ENCODE measurements at regions of chr2 and their contacts with region 1.

Region 1: GRCh38 chr2:136255648-136256463 is 137.9 kb upstream of the CXCR4 start:
- DNase-seq: peak; percentile 78
- ATAC-seq: peak; percentile 69
- H3K4me3 ChIP-seq: no peak overlapping the region
- H3K4me3 Mint-ChIP-seq: peak overlapping the region; percentile 64
- H3K27ac ChIP-seq: peak overlapping the region; percentile 43 to 74
- H3K27ac Mint-ChIP-seq: peak overlapping the region; percentile 92
- H3K4me1 ChIP-seq: peaks cover 55% of the 10 kb centered on the region in 2 donors
- H3K4me1 Mint-ChIP-seq: peaks cover 91% of the 10 kb centered on the region
- H3K27me3 ChIP-seq: no peaks in the 10 kb centered on the region
- H3K27me3 Mint-ChIP-seq: no peaks in the 10 kb centered on the region
- CTCF ChIP-seq: peak; percentile 24

Region 2: DNA sequence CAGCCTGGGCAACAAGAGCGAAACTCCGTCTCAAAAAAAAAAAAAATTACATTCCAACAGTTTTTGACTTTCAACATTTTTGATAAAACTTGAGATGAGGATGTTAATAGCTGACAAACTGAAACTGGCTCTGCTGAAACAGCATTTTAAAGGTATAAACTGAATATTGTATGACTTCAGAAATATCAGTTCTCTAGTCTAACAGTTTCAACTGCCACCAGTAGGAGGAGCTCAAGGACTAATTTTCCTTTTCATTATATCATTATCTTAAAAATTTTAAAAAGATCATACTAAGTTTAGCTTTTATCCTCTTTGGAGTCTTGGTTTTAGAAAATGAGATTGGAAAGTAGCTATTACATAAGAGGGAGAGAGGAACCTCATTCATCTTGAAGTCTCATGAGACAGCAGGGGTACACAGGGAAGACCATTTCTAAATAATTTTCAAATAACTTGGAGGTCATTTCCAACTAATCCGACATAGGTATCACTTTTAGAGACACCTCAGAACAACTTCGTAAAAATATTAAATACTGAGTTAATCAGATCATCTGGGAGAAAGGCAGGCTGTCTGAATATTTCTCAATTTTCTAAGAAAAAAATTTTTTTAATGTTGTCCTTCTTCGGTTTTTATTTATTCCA is 342.0 kb before region 1 on chr2:
- CTCF ChIA-PET with region 1: interaction called, 8 read pairs
- POLR2A ChIA-PET with region 1: no interaction called
- intact Hi-C with region 1: loop called (anchors 5 kb)
- DNase-seq: peak; percentile 74
- ATAC-seq: peak; percentile 41
- H3K4me3 ChIP-seq: no peak overlapping the region
- H3K4me3 Mint-ChIP-seq: no peak overlapping the region
- H3K27ac ChIP-seq: peak overlapping the region in 1 of 2 donors; percentile 46
- H3K27ac Mint-ChIP-seq: peak overlapping the region; percentile 46
- H3K4me1 ChIP-seq: no peaks in the 10 kb centered on the region
- H3K4me1 Mint-ChIP-seq: peaks cover 10% of the 10 kb centered on the region
- H3K27me3 ChIP-seq: no peaks in the 10 kb centered on the region
- H3K27me3 Mint-ChIP-seq: no peaks in the 10 kb centered on the region
- CTCF ChIP-seq: peak; percentile 96

Region 3: DNA sequence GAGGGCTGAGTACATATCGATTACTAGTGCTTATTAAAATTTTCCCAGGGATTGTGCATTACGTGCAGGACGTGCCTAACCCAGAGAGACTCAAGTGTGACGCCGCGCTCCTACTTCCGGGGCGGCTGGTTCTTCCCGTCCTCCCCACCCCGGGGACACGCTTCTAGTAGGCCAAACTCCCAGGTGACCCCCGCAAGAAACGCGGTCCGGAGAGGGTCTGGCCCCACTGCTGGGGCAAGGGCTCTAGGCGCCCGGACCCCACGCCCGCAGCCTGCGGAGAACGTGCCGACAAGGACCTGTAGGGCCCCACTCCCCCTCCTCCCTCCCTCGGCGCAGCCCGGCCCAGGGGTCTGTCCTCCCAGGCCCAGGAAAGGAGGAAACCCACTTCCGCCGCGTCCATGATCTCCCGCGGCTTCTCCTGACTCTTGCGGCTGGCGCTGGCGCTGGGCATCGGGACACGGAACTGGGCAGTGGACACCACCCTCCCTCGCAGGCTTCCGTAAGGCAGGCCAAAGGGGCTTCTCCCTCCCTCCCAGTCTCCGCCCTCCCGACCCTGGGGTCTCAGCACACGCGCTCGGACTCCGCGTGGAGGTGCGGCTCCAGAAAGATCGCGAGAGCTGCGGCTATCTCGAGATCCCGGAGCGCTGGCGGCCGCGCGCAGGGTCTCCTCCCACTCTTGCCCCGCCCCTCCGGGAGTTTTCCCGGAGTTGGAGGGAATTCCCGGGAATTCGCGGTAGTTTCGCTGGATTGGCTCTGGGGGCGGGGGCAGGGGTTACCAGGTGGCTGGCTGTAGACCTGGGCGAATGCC is 270.6 kb before region 1 on chr2 and contains the start of gene DARS1:
- CTCF ChIA-PET with region 1: no interaction called
- POLR2A ChIA-PET with region 1: no interaction called
- intact Hi-C with region 1: no loop called
- DNase-seq: peak; percentile 91
- ATAC-seq: peak; percentile 84
- H3K4me3 ChIP-seq: peak within 1 kb of the TSS; percentile 75 to 99 (median 93)
- H3K4me3 Mint-ChIP-seq: peak within 1 kb of the TSS; percentile 97
- H3K27ac ChIP-seq: peak within 1 kb of the TSS; percentile 94 to 97
- H3K27ac Mint-ChIP-seq: peak within 1 kb of the TSS; percentile 98
- H3K4me1 ChIP-seq: peaks cover 29 to 31% of the 10 kb centered on the region in 2 donors
- H3K4me1 Mint-ChIP-seq: peaks cover 50% of the 10 kb centered on the region
- H3K27me3 ChIP-seq: no peaks in the 10 kb centered on the region
- H3K27me3 Mint-ChIP-seq: no peaks in the 10 kb centered on the region
- CTCF ChIP-seq: no peak
- total RNA-seq, gene DARS1: 88.3 and 92.0 TPM in 2 replicates

Region 4: GRCh38 chr2:136117909-136118818 is 137.7 kb before region 1 on chr2 and contains the start of gene CXCR4:
- CTCF ChIA-PET with region 1: interaction called, 7 read pairs
- POLR2A ChIA-PET with region 1: interaction called, 51 read pairs
- intact Hi-C with region 1: loop called (anchors 2 kb)
- DNase-seq: peak; percentile 94
- ATAC-seq: peak; percentile 55
- H3K4me3 ChIP-seq: peak within 1 kb of the TSS; percentile 93 to 100 (median 98)
- H3K4me3 Mint-ChIP-seq: peak within 1 kb of the TSS; percentile 98
- H3K27ac ChIP-seq: peak within 1 kb of the TSS; percentile 96 to 99
- H3K27ac Mint-ChIP-seq: peak within 1 kb of the TSS; percentile 100
- H3K4me1 ChIP-seq: peaks cover 48 to 52% of the 10 kb centered on the region in 2 donors
- H3K4me1 Mint-ChIP-seq: peaks cover 59% of the 10 kb centered on the region
- H3K27me3 ChIP-seq: no peaks in the 10 kb centered on the region
- H3K27me3 Mint-ChIP-seq: no peaks in the 10 kb centered on the region
- CTCF ChIP-seq: no peak
- total RNA-seq, gene CXCR4: 2,047 and 2,119 TPM in 2 replicates

Region 5: DNA sequence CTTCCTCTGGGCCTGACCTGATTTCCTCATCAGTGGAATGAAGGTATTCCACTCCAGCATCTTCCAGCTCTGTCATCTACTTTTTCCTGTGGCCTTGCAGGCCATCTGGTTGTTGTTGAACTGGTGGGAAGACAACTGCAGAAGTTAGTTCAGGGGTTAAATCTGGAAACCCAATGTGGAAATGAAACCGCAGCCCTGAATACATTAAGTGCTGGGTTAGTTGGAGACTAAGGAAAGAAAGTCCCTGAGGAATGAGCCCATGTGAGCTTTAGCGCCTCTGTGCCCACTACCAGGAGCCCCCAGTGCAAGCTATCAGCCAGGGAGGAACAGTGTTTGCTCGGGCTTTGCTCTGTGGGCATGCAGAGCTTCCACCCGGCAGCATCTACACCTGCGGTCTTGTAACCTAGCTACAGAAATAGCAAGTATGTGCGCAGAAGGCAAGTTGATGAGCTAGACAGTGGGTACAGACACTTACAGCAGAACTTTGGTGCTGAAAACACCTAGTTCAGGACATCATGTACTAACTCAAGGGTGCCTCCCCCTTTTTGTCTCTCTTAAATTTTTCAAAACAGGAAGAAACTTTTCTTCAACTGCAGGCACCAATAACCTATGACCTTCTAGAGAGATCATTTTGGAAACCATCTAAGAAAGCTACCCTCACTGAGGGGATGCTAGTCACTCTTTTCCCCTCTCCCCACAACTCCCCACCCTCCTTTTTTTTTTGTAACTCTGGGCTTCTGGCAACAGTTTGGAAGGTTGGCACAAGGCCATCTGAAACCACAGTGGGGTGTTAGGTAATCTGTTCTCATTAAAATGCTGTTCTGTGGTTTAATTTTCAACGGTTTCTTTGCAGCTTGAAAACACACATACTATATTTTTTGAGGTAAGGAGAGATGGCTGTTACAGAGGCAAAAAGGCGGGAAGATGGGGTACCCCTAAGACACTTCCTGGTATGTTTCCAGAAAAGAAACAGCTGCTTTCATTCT is 119.6 kb before region 1 on chr2:
- CTCF ChIA-PET with region 1: interaction called, 17 read pairs
- POLR2A ChIA-PET with region 1: interaction called, 50 read pairs
- intact Hi-C with region 1: loop called (anchors 1 kb)
- DNase-seq: peak; percentile 94
- ATAC-seq: peak; percentile 50
- H3K4me3 ChIP-seq: peak overlapping the region in 3 of 5 experiments; percentile 10 to 33 (median 10)
- H3K4me3 Mint-ChIP-seq: peak overlapping the region; percentile 83
- H3K27ac ChIP-seq: peak overlapping the region; percentile 98 to 99
- H3K27ac Mint-ChIP-seq: peak overlapping the region; percentile 96
- H3K4me1 ChIP-seq: peaks cover 94 to 98% of the 10 kb centered on the region in 2 donors
- H3K4me1 Mint-ChIP-seq: peaks cover 92% of the 10 kb centered on the region
- H3K27me3 ChIP-seq: no peaks in the 10 kb centered on the region
- H3K27me3 Mint-ChIP-seq: no peaks in the 10 kb centered on the region
- CTCF ChIP-seq: no peak

Region 6: GRCh38 chr2:136212423-136213378 is 43.2 kb before region 1 on chr2:
- CTCF ChIA-PET with region 1: interaction called, 22 read pairs
- POLR2A ChIA-PET with region 1: interaction called, 34 read pairs
- intact Hi-C with region 1: loop called (anchors 1 kb)
- DNase-seq: peak; percentile 81
- ATAC-seq: peak; percentile 74
- H3K4me3 ChIP-seq: no peak overlapping the region
- H3K4me3 Mint-ChIP-seq: peak overlapping the region; percentile 74
- H3K27ac ChIP-seq: peak overlapping the region; percentile 53 to 99
- H3K27ac Mint-ChIP-seq: peak overlapping the region; percentile 81
- H3K4me1 ChIP-seq: peaks cover 80 to 81% of the 10 kb centered on the region in 2 donors
- H3K4me1 Mint-ChIP-seq: peaks cover 96% of the 10 kb centered on the region
- H3K27me3 ChIP-seq: no peaks in the 10 kb centered on the region
- H3K27me3 Mint-ChIP-seq: no peaks in the 10 kb centered on the region
- CTCF ChIP-seq: no peak

Region 7: DNA sequence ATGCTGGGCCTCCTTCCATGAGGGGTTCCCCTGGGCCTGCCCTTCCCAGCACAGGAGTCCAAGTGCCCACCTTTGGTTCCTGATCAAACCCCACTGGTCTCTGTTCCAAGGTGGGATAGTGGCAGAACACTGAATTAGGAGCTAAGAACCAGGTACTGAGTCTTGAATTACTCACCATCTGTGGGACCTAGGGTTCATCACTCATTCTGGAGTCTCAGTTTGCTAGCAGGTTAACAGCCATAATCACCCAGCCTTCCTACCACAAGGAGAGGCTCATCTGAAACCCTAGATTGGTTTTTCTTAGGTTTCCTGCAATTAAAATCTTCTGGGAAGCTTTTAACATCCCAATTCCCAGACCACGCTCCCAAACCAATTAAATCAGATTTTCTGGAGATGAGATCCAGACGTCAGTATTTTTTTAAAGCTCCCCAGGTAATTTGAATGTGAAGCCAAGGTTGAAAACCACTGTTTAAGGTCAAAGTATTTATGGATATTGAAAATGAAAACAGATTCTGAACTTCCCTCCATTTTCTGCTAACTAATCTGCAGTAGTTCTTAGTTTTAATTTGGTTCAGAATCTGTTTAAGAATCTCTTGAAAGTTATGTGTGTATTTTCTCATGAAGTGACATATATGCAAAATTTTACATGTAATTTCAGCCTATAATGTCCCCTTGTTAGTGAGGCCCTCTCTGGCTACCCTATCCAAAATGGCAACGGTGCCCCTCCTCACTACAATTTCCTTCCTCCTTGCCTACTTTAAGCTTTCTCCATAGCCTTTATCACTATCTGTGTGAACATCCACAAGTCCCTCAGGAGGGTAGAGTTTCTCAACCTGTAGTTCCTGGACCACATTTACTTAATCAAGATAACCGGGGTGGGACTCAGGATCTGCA is 28.6 kb after region 1 on chr2:
- CTCF ChIA-PET with region 1: interaction called, 8 read pairs
- POLR2A ChIA-PET with region 1: interaction called, 12 read pairs
- intact Hi-C with region 1: loop called (anchors 1 kb)
- DNase-seq: peak; percentile 35
- ATAC-seq: peak; percentile 50
- H3K4me3 ChIP-seq: peak overlapping the region in 1 of 5 experiments; percentile 20
- H3K4me3 Mint-ChIP-seq: peak overlapping the region; percentile 80
- H3K27ac ChIP-seq: peak overlapping the region; percentile 54 to 67
- H3K27ac Mint-ChIP-seq: peak overlapping the region; percentile 86
- H3K4me1 ChIP-seq: peaks cover 50 to 68% of the 10 kb centered on the region in 2 donors
- H3K4me1 Mint-ChIP-seq: peaks cover 68% of the 10 kb centered on the region
- H3K27me3 ChIP-seq: no peaks in the 10 kb centered on the region
- H3K27me3 Mint-ChIP-seq: no peaks in the 10 kb centered on the region
- CTCF ChIP-seq: no peak

Region 8: GRCh38 chr2:136327162-136327852 is 71.5 kb after region 1 on chr2:
- CTCF ChIA-PET with region 1: interaction called, 10 read pairs
- POLR2A ChIA-PET with region 1: interaction called, 9 read pairs
- intact Hi-C with region 1: no loop called
- DNase-seq: peak; percentile 53
- ATAC-seq: peak; percentile 75
- H3K4me3 ChIP-seq: peak overlapping the region in 4 of 5 experiments; percentile 6 to 32 (median 16)
- H3K4me3 Mint-ChIP-seq: peak overlapping the region; percentile 69
- H3K27ac ChIP-seq: peak overlapping the region; percentile 66
- H3K27ac Mint-ChIP-seq: peak overlapping the region; percentile 88
- H3K4me1 ChIP-seq: peaks cover 33 to 48% of the 10 kb centered on the region in 2 donors
- H3K4me1 Mint-ChIP-seq: peaks cover 57% of the 10 kb centered on the region
- H3K27me3 ChIP-seq: no peaks in the 10 kb centered on the region
- H3K27me3 Mint-ChIP-seq: no peaks in the 10 kb centered on the region
- CTCF ChIP-seq: no peak